CD4-positive, alpha-beta memory T cell (primary cell): ENCODE measurements at regions of chr22 and their contacts with region 1.

Region 1: GRCh38 chr22:43993027-43993760 is 30.9 kb upstream of the PARVB start:
- DNase-seq: peak; percentile 53 to 60 (median 54)
- H3K4me3 ChIP-seq: no peak overlapping the region
- H3K4me3 Mint-ChIP-seq: peak overlapping the region in 5 of 8 donors; percentile 22 to 68 (median 46)
- H3K27ac ChIP-seq: no peak overlapping the region
- H3K27ac Mint-ChIP-seq: peak overlapping the region in 6 of 7 donors; percentile 44 to 89 (median 58)
- H3K4me1 ChIP-seq: peaks cover 11% of the 10 kb centered on the region
- H3K4me1 Mint-ChIP-seq: peaks cover 11 to 36% (median 26%) of the 10 kb centered on the region in 4 donors
- H3K27me3 ChIP-seq: no peaks in the 10 kb centered on the region
- H3K27me3 Mint-ChIP-seq: no peaks in the 10 kb centered on the region

Region 2: DNA sequence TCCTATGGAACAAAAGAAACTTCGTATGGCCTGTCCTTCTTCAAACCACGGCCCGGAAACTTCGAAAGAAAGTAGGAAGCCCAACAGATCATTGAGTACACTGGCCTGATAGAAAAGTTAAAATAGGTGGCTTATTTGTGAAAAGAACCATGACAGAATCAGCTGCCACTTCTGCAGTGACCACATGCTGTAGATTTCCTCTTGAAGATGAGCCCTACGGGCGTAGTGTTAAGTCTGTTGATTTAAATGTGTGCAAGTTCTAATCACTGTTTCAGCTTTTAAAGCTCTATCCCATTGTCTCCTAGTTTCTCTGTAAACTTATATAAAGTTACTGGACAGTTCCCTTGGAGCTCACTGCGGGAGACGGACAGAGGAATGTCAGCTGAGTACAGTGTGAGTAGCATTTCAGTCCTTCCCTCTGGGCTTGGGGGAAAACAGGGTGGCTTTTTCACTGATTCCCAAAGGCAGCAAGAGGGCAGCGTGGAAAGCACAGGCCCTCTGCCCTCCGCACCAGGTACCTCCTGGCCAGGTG is 20.2 kb before region 1 on chr22:
- CTCF ChIA-PET with region 1: interaction called, 11 read pairs
- POLR2A ChIA-PET with region 1: no interaction called
- intact Hi-C with region 1: no loop called
- DNase-seq: no peak
- H3K4me3 ChIP-seq: no peak overlapping the region
- H3K4me3 Mint-ChIP-seq: no peak overlapping the region
- H3K27ac ChIP-seq: no peak overlapping the region
- H3K27ac Mint-ChIP-seq: no peak overlapping the region
- H3K4me1 ChIP-seq: no peaks in the 10 kb centered on the region
- H3K4me1 Mint-ChIP-seq: peaks cover 0 to 3% (median 1%) of the 10 kb centered on the region in 4 donors
- H3K27me3 ChIP-seq: no peaks in the 10 kb centered on the region
- H3K27me3 Mint-ChIP-seq: no peaks in the 10 kb centered on the region

Region 3: GRCh38 chr22:44033694-44034093 is 40.5 kb after region 1 on chr22:
- CTCF ChIA-PET with region 1: interaction called, 16 read pairs
- POLR2A ChIA-PET with region 1: no interaction called
- intact Hi-C with region 1: no loop called
- DNase-seq: no peak
- H3K4me3 ChIP-seq: no peak overlapping the region
- H3K4me3 Mint-ChIP-seq: peak overlapping the region in 1 of 8 donors; percentile 15
- H3K27ac ChIP-seq: no peak overlapping the region
- H3K27ac Mint-ChIP-seq: peak overlapping the region in 1 of 7 donors; percentile 57
- H3K4me1 ChIP-seq: peaks cover 26% of the 10 kb centered on the region
- H3K4me1 Mint-ChIP-seq: peaks cover 6 to 25% (median 23%) of the 10 kb centered on the region in 4 donors
- H3K27me3 ChIP-seq: no peaks in the 10 kb centered on the region
- H3K27me3 Mint-ChIP-seq: no peaks in the 10 kb centered on the region

Region 4: DNA sequence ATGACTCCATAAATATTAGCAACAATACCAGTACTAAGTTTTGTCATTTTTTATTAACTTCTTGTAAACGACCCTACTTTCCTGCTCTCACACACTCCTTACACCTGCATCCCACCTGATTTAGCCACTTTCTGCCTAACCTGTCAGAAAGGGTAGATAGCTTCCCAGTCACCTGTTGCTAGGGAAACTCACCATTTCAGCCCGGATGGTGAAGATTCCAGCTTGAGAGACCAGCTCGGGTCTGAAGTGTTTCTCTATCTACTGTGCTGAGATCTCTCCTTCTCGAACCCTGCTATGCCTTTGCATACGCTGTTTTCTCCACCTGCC is 187.5 kb after region 1 on chr22 and contains the start of gene PARVG:
- CTCF ChIA-PET with region 1: interaction called, 18 read pairs
- POLR2A ChIA-PET with region 1: no interaction called
- intact Hi-C with region 1: loop called (anchors 2 kb)
- DNase-seq: peak; percentile 63 to 77 (median 67)
- H3K4me3 ChIP-seq: peak within 1 kb of the TSS; percentile 95 to 96
- H3K4me3 Mint-ChIP-seq: peak within 1 kb of the TSS; percentile 82 to 92 (median 89)
- H3K27ac ChIP-seq: peak within 1 kb of the TSS; percentile 81
- H3K27ac Mint-ChIP-seq: peak within 1 kb of the TSS; percentile 86 to 98 (median 95)
- H3K4me1 ChIP-seq: peaks cover 29% of the 10 kb centered on the region
- H3K4me1 Mint-ChIP-seq: peaks cover 16 to 35% (median 27%) of the 10 kb centered on the region in 4 donors
- H3K27me3 ChIP-seq: no peaks in the 10 kb centered on the region
- H3K27me3 Mint-ChIP-seq: no peaks in the 10 kb centered on the region
- total RNA-seq, gene PARVG: 191 to 194 TPM

Region 5: DNA sequence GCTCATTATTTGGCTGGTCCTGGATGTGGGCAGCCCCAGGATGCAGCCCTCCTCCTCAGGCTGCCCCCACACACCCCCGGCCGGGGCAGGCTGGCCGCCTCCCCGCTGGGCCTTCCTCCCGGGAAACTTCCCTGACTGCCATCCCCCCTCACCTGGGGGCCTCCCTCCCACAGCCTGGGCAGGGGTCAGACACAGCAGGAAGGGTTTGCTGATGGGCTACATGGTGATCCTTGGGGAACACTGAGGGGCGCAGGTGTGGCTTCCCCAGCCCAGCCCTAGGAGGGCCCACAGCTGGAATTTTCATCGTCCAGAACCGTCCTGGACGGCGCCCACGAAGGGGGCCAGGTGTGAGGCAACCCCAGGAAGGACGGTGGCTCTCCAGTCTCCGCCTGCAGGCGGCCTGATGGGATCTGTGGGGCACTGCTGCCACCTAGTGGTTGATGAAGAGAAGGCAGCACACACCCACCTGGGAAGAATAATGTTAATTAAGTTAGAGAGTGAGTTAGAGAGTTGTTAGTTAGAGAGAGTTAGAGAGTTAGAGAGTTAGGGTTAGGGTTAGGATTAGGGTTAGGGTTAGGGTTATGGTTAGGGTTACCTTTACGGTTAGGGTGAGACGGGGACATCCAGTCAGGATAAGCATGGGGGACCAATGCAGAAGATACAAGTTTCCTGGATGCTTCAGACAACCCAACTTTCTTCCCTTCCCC is 632.9 kb after region 1 on chr22:
- CTCF ChIA-PET with region 1: interaction called, 122 read pairs
- POLR2A ChIA-PET with region 1: interaction called, 10 read pairs
- intact Hi-C with region 1: no loop called
- DNase-seq: peak; percentile 73 to 80 (median 77)
- H3K4me3 ChIP-seq: no peak overlapping the region
- H3K4me3 Mint-ChIP-seq: no peak overlapping the region
- H3K27ac ChIP-seq: no peak overlapping the region
- H3K27ac Mint-ChIP-seq: peak overlapping the region; percentile 2 to 45 (median 22)
- H3K4me1 ChIP-seq: no peaks in the 10 kb centered on the region
- H3K4me1 Mint-ChIP-seq: peaks cover 4 to 12% (median 7%) of the 10 kb centered on the region in 4 donors
- H3K27me3 ChIP-seq: no peaks in the 10 kb centered on the region
- H3K27me3 Mint-ChIP-seq: peaks cover 0 to 2% of the 10 kb centered on the region in 2 donors